ENCODE measurements at regions of chr20 and their contacts with region 1.

Region 1: GRCh38 chr20:50509935-50510705 is at the start of gene PTPN1:
- DNase-seq: peak; percentile 99
- H3K4me3 ChIP-seq: peak within 1 kb of the TSS; percentile 78
- H3K27ac ChIP-seq: peak within 1 kb of the TSS; percentile 35
- H3K4me1 ChIP-seq: peaks cover 23% of the 10 kb centered on the region
- CTCF ChIP-seq: no peak
- total RNA-seq, gene PTPN1: 21.6 and 25.1 TPM in 2 replicates

Region 2: GRCh38 chr20:50153485-50154377 is 356.4 kb before region 1 on chr20 and contains the start of gene PEDS1:
- CTCF ChIA-PET with region 1: no interaction called
- POLR2A ChIA-PET with region 1: no interaction called
- intact Hi-C with region 1: no loop called
- DNase-seq: peak; percentile 92
- H3K4me3 ChIP-seq: peak within 1 kb of the TSS; percentile 96
- H3K27ac ChIP-seq: no peak within 1 kb of the TSS
- H3K4me1 ChIP-seq: peaks cover 20% of the 10 kb centered on the region
- CTCF ChIP-seq: no peak
- total RNA-seq, gene PEDS1: 12.0 and 25.9 TPM in 2 replicates

Region 3: DNA sequence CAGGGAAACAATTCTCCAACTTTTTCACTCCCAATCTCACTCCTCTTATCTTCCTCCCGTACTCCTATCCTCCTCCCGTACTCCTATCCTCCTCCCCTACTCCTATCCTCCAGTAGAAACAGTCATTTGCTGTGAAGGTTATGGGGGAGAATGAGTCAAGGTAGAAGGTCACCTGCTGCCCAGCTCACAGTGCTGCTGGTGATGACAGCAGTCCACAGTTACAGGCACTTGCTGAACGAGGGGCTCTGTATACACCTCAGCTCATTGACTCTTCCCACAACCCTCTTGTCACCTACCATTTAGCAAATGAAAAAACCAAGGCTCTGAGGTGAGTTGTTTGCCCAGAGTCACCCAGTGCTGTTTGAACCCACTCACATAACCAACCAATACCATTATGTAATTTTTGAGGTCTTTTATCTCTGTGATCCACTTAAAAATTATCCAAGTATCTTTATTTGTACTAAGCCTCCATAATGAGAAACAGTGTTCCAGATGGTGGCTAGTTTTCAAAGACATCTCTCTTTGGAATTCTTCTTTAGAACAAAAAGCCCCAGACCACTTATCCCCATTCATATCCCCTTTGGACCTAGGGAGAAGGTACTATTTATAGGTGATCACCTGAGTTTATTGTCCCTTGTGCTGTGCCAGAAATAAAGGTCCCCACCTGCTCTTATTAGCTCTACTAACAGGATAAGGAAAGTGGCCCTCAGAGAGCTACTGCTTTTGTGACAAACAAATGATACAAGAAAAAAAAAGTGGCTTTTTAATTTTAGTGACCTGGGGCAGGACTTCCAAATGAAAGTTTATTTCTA is 53.2 kb after region 1 on chr20:
- CTCF ChIA-PET with region 1: no interaction called
- POLR2A ChIA-PET with region 1: no interaction called
- intact Hi-C with region 1: no loop called
- DNase-seq: no peak
- H3K4me3 ChIP-seq: no peak overlapping the region
- H3K27ac ChIP-seq: no peak overlapping the region
- H3K4me1 ChIP-seq: no peaks in the 10 kb centered on the region
- CTCF ChIP-seq: no peak

Region 4: GRCh38 chr20:50582591-50583234 is 72.6 kb after region 1 on chr20:
- CTCF ChIA-PET with region 1: no interaction called
- POLR2A ChIA-PET with region 1: no interaction called
- intact Hi-C with region 1: loop called (anchors 2 kb)
- DNase-seq: peak; percentile 89
- H3K4me3 ChIP-seq: peak overlapping the region; percentile 15
- H3K27ac ChIP-seq: peak overlapping the region; percentile 66
- H3K4me1 ChIP-seq: peaks cover 29% of the 10 kb centered on the region
- CTCF ChIP-seq: no peak

Region 5: GRCh38 chr20:50670126-50670862 is 160.2 kb after region 1 on chr20:
- CTCF ChIA-PET with region 1: no interaction called
- POLR2A ChIA-PET with region 1: no interaction called
- intact Hi-C with region 1: no loop called
- DNase-seq: no peak
- H3K4me3 ChIP-seq: no peak overlapping the region
- H3K27ac ChIP-seq: no peak overlapping the region
- H3K4me1 ChIP-seq: peaks cover 16% of the 10 kb centered on the region
- CTCF ChIP-seq: no peak